Naive thymus-derived CD4-positive, alpha-beta T cell (primary cell): ENCODE measurements at regions of chr3 and their contacts with region 1.

Region 1: DNA sequence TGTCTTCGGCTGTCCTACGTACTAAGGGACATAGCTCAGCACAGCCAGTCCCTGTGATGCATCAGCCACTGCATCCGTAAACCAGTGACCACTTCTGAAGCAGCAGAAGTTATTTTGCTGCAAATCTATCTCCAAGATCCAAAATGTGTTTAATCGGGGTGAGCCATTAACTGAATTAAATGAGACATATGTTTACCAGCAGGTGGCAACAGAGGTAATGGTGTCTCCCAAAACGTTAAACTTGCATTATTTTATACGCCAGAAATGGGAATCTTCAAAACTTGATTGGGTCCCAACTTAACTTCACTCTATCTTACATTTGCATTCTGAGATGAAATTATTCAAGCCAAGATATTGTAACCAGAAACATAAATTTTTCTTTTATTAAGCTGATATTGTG is 75.3 kb upstream of the BOC start:
- DNase-seq: peak in 1 of 9 donors; percentile 5
- ATAC-seq: no peak
- H3K4me3 ChIP-seq: no peak overlapping the region
- H3K4me3 Mint-ChIP-seq: no peak overlapping the region
- H3K27ac ChIP-seq: no peak overlapping the region
- H3K27ac Mint-ChIP-seq: no peak overlapping the region
- H3K4me1 ChIP-seq: no peaks in the 10 kb centered on the region
- H3K4me1 Mint-ChIP-seq: peaks cover 0 to 3% (median 0%) of the 10 kb centered on the region in 7 donors
- H3K27me3 ChIP-seq: no peaks in the 10 kb centered on the region
- H3K27me3 Mint-ChIP-seq: no peaks in the 10 kb centered on the region

Region 2: GRCh38 chr3:113275929-113276750 is 140.1 kb after region 1 on chr3:
- CTCF ChIA-PET with region 1: no interaction called
- POLR2A ChIA-PET with region 1: no interaction called
- intact Hi-C with region 1: loop called in 1 of 2 experiments (anchors 1 kb)
- DNase-seq: no peak
- ATAC-seq: peak; percentile 78
- H3K4me3 ChIP-seq: no peak overlapping the region
- H3K4me3 Mint-ChIP-seq: peak overlapping the region in 5 of 10 donors; percentile 1 to 63 (median 38)
- H3K27ac ChIP-seq: no peak overlapping the region
- H3K27ac Mint-ChIP-seq: peak overlapping the region in 1 of 9 donors; percentile 15
- H3K4me1 ChIP-seq: no peaks in the 10 kb centered on the region
- H3K4me1 Mint-ChIP-seq: peaks cover 2 to 11% (median 7%) of the 10 kb centered on the region in 7 donors
- H3K27me3 ChIP-seq: no peaks in the 10 kb centered on the region
- H3K27me3 Mint-ChIP-seq: peaks cover 0 to 9% (median 6%) of the 10 kb centered on the region in 5 donors

Region 3: DNA sequence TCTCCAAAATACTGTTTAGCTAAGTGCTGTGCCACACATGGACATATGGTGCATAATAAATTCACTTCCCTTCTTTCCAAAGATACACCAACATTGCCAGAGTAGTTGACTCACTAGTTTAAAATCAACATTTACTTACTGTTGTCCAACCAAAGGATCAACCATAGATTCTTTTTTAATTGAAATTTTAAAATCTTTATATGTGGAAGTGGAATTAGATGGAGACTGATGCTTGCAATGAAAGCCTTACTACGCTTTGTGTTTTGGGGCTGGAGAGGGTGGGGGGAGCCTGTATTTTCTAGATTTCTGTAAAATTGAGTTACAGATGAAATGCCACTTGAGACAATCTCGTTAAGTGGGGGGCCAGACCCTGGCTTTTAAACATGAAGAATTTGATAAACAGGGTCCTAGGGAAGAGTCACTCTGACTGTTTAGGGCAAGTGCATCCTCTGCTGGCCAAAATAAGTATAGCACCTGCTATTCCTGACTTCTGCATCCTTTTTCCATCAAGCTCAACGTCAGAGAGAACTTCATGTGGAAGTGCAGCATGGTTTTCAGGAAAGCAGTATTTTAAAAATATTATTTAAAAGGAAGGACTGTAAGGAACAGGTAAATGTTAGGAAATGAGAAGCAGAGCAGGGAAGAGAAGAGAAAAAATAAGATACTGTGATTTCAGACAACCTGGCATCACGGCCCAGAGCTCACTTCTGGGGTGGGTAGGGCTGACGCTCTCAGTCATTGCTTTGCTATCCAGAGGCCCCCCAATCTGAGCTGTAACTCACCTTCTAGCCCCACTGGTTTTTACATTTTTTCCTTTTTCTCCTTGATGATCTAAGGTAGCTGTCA is 152.0 kb after region 1 on chr3:
- CTCF ChIA-PET with region 1: no interaction called
- POLR2A ChIA-PET with region 1: no interaction called
- intact Hi-C with region 1: loop called (anchors 1 kb)
- DNase-seq: peak in 6 of 9 donors; percentile 9 to 57 (median 40)
- ATAC-seq: peak; percentile 60
- H3K4me3 ChIP-seq: no peak overlapping the region
- H3K4me3 Mint-ChIP-seq: no peak overlapping the region
- H3K27ac ChIP-seq: no peak overlapping the region
- H3K27ac Mint-ChIP-seq: no peak overlapping the region
- H3K4me1 ChIP-seq: no peaks in the 10 kb centered on the region
- H3K4me1 Mint-ChIP-seq: peaks cover 0 to 4% (median 0%) of the 10 kb centered on the region in 7 donors
- H3K27me3 ChIP-seq: no peaks in the 10 kb centered on the region
- H3K27me3 Mint-ChIP-seq: no peaks in the 10 kb centered on the region

Region 4: DNA sequence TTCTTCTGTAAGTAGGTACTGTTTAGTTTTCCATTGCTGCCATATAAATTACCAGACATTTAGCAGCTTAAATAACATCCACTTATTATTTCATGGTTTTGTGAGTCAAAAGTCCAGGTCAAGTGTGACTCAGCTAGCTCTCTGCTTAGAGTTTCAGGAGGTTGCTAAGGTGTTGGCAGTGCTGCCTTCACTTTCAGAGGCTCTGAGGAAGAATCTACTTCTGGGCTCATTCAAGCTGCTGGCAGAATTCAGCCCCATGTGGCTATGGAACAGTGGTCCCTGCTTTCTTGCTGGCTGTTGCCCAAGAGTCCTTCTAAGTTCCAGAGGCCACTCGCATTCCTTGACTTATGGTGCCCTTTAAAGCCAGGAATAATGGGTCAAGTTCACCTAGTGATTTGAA is 300.7 kb after region 1 on chr3:
- CTCF ChIA-PET with region 1: no interaction called
- POLR2A ChIA-PET with region 1: no interaction called
- intact Hi-C with region 1: no loop called
- DNase-seq: no peak
- ATAC-seq: no peak
- H3K4me3 ChIP-seq: no peak overlapping the region
- H3K4me3 Mint-ChIP-seq: no peak overlapping the region
- H3K27ac ChIP-seq: no peak overlapping the region
- H3K27ac Mint-ChIP-seq: no peak overlapping the region
- H3K4me1 ChIP-seq: no peaks in the 10 kb centered on the region
- H3K4me1 Mint-ChIP-seq: peaks cover 0 to under 1% (median 0%) of the 10 kb centered on the region in 7 donors
- H3K27me3 ChIP-seq: no peaks in the 10 kb centered on the region
- H3K27me3 Mint-ChIP-seq: no peaks in the 10 kb centered on the region

Region 5: GRCh38 chr3:113575206-113575605 is 439.1 kb after region 1 on chr3:
- CTCF ChIA-PET with region 1: no interaction called
- POLR2A ChIA-PET with region 1: no interaction called
- intact Hi-C with region 1: loop called in 1 of 2 experiments (anchors 5 kb)
- DNase-seq: no peak
- ATAC-seq: no peak
- H3K4me3 ChIP-seq: no peak overlapping the region
- H3K4me3 Mint-ChIP-seq: no peak overlapping the region
- H3K27ac ChIP-seq: no peak overlapping the region
- H3K27ac Mint-ChIP-seq: peak overlapping the region in 8 of 9 donors; percentile 10 to 79 (median 66)
- H3K4me1 ChIP-seq: no peaks in the 10 kb centered on the region
- H3K4me1 Mint-ChIP-seq: peaks cover 3 to 21% (median 13%) of the 10 kb centered on the region in 7 donors
- H3K27me3 ChIP-seq: no peaks in the 10 kb centered on the region
- H3K27me3 Mint-ChIP-seq: no peaks in the 10 kb centered on the region

Region 6: DNA sequence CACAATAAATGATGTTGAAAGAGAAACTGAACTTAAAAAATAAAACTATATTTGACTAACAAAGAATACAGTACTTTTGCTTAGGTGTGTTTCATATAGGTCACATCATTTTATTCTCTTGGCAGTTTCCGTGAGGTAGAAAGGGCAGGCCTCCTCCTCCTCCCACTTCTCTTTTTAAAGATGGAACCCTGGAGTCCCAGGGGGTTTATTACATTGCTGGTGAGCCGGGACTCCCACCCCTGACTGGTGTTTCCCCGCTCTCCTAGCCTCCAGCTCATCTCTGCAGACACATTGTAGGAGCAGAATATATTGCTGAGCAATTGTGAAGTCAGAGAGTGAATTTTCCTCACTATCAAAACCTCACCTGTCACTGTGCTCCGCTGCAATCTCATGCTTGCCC is 841.8 kb after region 1 on chr3:
- CTCF ChIA-PET with region 1: no interaction called
- POLR2A ChIA-PET with region 1: no interaction called
- intact Hi-C with region 1: no loop called
- DNase-seq: no peak
- ATAC-seq: no peak
- H3K4me3 ChIP-seq: no peak overlapping the region
- H3K4me3 Mint-ChIP-seq: no peak overlapping the region
- H3K27ac ChIP-seq: no peak overlapping the region
- H3K27ac Mint-ChIP-seq: no peak overlapping the region
- H3K4me1 ChIP-seq: no peaks in the 10 kb centered on the region
- H3K4me1 Mint-ChIP-seq: peaks cover 0 to 1% (median 0%) of the 10 kb centered on the region in 7 donors
- H3K27me3 ChIP-seq: no peaks in the 10 kb centered on the region
- H3K27me3 Mint-ChIP-seq: peaks cover 0 to 4% (median 0%) of the 10 kb centered on the region in 5 donors